OCI-LY7 (cell line): ENCODE measurements at regions of chr2 and their contacts with region 1.

Region 1: GRCh38 chr2:219997341-219997851 is 370.0 kb downstream of the SLC4A3 start:
- DNase-seq: peak; percentile 4
- H3K4me3 ChIP-seq: no peak overlapping the region
- H3K27ac ChIP-seq: no peak overlapping the region
- H3K4me1 ChIP-seq: no peaks in the 10 kb centered on the region
- CTCF ChIP-seq: peak; percentile 67

Region 2: DNA sequence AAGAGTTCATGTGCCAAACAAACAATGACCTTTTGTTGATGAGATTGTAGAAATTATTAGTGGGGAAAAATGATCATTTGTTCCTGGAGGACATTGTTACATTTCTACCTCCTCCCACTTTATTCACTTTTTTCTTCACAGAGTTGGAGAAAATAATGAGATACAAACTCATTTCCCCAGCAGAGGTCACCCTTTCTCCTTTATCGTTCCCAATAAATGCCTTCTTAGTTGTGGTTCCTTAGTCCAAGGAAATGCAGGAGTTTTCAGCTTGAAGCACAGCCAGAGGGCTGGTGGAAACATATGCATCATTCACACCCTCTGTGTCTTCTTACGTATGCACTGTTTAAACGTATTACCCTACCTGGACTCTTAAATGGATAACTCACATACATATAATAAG is 261.2 kb before region 1 on chr2:
- CTCF ChIA-PET with region 1: no interaction called
- POLR2A ChIA-PET with region 1: no interaction called
- intact Hi-C with region 1: loop called (anchors 10 kb)
- DNase-seq: peak; percentile 37
- H3K4me3 ChIP-seq: no peak overlapping the region
- H3K27ac ChIP-seq: no peak overlapping the region
- H3K4me1 ChIP-seq: no peaks in the 10 kb centered on the region
- CTCF ChIP-seq: peak; percentile 84

Region 3: GRCh38 chr2:219901155-219901554 is 96.2 kb before region 1 on chr2:
- CTCF ChIA-PET with region 1: no interaction called
- POLR2A ChIA-PET with region 1: no interaction called
- intact Hi-C with region 1: no loop called
- DNase-seq: no peak
- H3K4me3 ChIP-seq: no peak overlapping the region
- H3K27ac ChIP-seq: no peak overlapping the region
- H3K4me1 ChIP-seq: no peaks in the 10 kb centered on the region
- CTCF ChIP-seq: no peak

Region 4: DNA sequence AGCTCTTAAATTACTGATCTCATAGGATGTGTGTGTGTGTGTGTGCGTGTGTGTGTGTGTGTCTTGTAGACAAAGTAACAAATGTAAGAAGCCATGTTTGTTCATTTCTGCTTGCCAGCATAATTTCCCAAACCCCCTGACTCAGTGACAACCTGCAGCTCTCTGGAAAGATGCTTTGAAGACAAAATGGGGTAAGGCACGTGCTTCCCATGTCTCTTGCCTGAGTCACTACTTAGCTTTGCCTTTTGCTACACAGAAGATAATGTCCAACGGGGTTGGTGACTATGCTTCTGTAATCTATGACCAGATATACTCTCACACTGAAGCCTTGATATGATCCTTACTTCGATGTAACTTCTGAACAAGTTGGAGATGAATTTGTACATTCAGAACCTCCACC is 37.9 kb before region 1 on chr2:
- CTCF ChIA-PET with region 1: no interaction called
- POLR2A ChIA-PET with region 1: no interaction called
- intact Hi-C with region 1: loop called (anchors 2 kb)
- DNase-seq: no peak
- H3K4me3 ChIP-seq: no peak overlapping the region
- H3K27ac ChIP-seq: no peak overlapping the region
- H3K4me1 ChIP-seq: no peaks in the 10 kb centered on the region
- CTCF ChIP-seq: no peak

Region 5: DNA sequence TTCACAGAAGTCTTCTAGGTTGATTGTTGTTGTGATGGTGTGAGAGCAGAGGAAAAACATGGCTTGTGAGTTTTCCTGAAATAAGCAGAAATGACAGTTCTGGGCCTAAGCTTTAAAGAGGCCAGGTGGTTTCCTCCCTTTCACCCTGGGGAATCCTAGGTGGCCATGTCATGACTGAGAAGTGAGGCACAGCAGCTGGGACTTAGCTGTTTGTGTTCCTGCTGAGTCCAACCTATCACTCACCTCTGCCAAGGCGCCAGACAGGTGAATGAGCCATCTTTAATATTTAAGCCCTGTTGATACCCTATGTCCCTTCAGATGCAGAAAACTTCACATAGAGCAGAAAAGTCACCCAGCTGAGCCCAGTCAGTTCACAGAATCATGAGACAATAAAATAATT is 14.5 kb after region 1 on chr2:
- CTCF ChIA-PET with region 1: no interaction called
- POLR2A ChIA-PET with region 1: no interaction called
- intact Hi-C with region 1: no loop called
- DNase-seq: no peak
- H3K4me3 ChIP-seq: no peak overlapping the region
- H3K27ac ChIP-seq: no peak overlapping the region
- H3K4me1 ChIP-seq: no peaks in the 10 kb centered on the region
- CTCF ChIP-seq: no peak